ENCODE measurements at regions of chr4 and their contacts with region 1.

Region 1: GRCh38 chr4:89894649-89895550 is at the start of gene MMRN1:
- DNase-seq: peak; percentile 95
- H3K4me3 ChIP-seq: peak within 1 kb of the TSS; percentile 83 to 100 (median 97)
- H3K27ac ChIP-seq: peak within 1 kb of the TSS; percentile 92
- H3K4me1 ChIP-seq: peaks cover 40% of the 10 kb centered on the region
- H3K27me3 ChIP-seq: no peaks in the 10 kb centered on the region
- CTCF ChIP-seq: no peak
- POLR2A ChIP-seq: peak; percentile 90
- total RNA-seq, gene MMRN1: 318 and 414 TPM in 2 replicates

Region 2: DNA sequence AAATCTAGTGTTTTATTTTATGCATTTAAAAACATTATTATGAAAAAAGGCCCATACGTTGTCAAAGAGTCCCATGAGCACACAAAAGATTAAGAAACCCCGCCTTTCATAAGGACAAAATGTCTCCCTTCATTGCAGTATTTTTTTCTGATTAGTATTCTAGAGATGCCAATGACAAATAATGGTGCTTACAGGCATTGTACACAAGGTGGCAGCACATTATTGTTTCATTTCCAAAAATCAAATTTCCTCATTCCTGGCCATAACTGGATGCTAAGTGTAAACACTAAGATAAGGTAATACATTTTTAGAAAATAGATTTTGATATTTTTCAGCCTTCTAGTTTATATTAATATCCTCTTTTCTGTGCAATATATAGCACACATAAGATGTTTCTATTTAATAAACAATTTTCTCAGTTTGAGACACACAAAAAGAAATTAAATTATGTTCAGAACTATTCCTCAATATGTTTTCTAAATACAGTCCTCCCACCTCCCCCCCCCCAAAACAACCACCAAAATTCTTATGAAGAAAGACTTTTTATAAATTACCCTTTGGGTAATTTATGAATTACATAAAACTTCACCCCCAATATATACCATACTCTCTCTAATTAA is 735.9 kb before region 1 on chr4:
- CTCF ChIA-PET with region 1: no interaction called
- POLR2A ChIA-PET with region 1: no interaction called
- dilution Hi-C with region 1: no loop called
- intact Hi-C with region 1: loop called (anchors 10 kb)
- DNase-seq: peak; percentile 77
- H3K4me3 ChIP-seq: no peak overlapping the region
- H3K27ac ChIP-seq: no peak overlapping the region
- H3K4me1 ChIP-seq: peaks cover 23% of the 10 kb centered on the region
- H3K27me3 ChIP-seq: no peaks in the 10 kb centered on the region
- CTCF ChIP-seq: peak; percentile 44 to 47
- POLR2A ChIP-seq: no peak

Region 3: DNA sequence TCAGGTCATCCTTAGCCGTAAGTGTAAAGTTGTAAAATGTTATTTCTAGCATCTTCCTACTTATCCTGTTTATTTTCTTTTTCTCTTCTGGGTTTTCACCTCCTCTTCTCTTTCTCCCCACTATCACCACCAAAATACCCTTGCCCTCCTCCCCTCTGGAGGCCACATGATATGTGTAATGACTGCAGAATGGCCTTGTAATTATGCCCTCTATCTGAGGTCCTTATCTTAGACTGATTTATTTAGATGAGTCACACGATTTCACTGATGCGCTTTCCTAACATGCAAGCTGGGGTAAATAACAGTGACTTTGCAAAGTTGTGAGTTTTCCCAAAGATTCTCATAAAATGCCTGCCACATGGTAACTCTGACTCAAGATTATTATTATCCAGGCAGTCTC is 355.5 kb before region 1 on chr4:
- CTCF ChIA-PET with region 1: no interaction called
- POLR2A ChIA-PET with region 1: no interaction called
- dilution Hi-C with region 1: no loop called
- intact Hi-C with region 1: loop called (anchors 2 kb)
- DNase-seq: peak; percentile 90
- H3K4me3 ChIP-seq: no peak overlapping the region
- H3K27ac ChIP-seq: peak overlapping the region; percentile 94
- H3K4me1 ChIP-seq: peaks cover 61% of the 10 kb centered on the region
- H3K27me3 ChIP-seq: no peaks in the 10 kb centered on the region
- CTCF ChIP-seq: no peak
- POLR2A ChIP-seq: no peak

Region 4: GRCh38 chr4:89640620-89641366 is 254.1 kb before region 1 on chr4:
- CTCF ChIA-PET with region 1: interaction called, 10 read pairs
- POLR2A ChIA-PET with region 1: no interaction called
- dilution Hi-C with region 1: no loop called
- intact Hi-C with region 1: no loop called
- DNase-seq: no peak
- H3K4me3 ChIP-seq: no peak overlapping the region
- H3K27ac ChIP-seq: no peak overlapping the region
- H3K4me1 ChIP-seq: no peaks in the 10 kb centered on the region
- H3K27me3 ChIP-seq: no peaks in the 10 kb centered on the region
- CTCF ChIP-seq: peak; percentile 56 to 68
- POLR2A ChIP-seq: no peak

Region 5: GRCh38 chr4:89724716-89725115 is 170.2 kb before region 1 on chr4:
- CTCF ChIA-PET with region 1: no interaction called
- POLR2A ChIA-PET with region 1: no interaction called
- dilution Hi-C with region 1: no loop called
- intact Hi-C with region 1: loop called (anchors 10 kb)
- DNase-seq: peak; percentile 66
- H3K4me3 ChIP-seq: no peak overlapping the region
- H3K27ac ChIP-seq: peak overlapping the region; percentile 73
- H3K4me1 ChIP-seq: peaks cover 28% of the 10 kb centered on the region
- H3K27me3 ChIP-seq: no peaks in the 10 kb centered on the region
- CTCF ChIP-seq: no peak
- POLR2A ChIP-seq: no peak

Region 6: GRCh38 chr4:89800012-89800516 is 94.8 kb before region 1 on chr4:
- CTCF ChIA-PET with region 1: no interaction called
- POLR2A ChIA-PET with region 1: no interaction called
- dilution Hi-C with region 1: no loop called
- intact Hi-C with region 1: loop called (anchors 1 kb)
- DNase-seq: peak; percentile 91
- H3K4me3 ChIP-seq: peak overlapping the region in 1 of 3 experiments; percentile 45
- H3K27ac ChIP-seq: peak overlapping the region; percentile 90
- H3K4me1 ChIP-seq: peaks cover 53% of the 10 kb centered on the region
- H3K27me3 ChIP-seq: no peaks in the 10 kb centered on the region
- CTCF ChIP-seq: no peak
- POLR2A ChIP-seq: peak; percentile 77

Region 7: DNA sequence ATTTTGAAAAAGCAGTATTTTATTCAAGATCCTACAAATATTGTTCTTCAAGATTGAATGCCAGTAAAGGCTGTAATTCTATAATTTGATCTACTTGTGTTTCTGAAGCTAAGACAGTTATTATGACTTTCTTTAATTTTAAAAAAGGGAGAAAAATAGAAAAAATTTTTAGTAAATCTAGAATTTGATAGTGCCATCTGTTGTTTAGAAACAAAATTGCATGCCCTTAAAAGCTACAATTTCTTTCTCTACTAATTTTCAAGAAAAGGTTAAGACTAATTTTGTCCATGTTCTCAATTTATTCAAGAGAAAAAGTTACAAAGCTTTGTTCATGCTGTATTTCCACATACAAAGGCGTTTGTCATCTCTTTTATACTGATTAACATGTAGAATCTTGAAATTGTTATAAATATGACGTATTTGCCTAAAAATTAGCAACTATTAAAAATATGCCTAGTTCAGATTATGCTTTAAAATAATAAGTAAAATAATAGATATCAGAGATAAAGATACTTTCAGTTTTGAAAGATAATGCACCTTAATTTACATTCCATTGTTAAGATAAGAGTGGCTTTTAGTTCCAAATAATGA is 25.8 kb before region 1 on chr4:
- CTCF ChIA-PET with region 1: interaction called, 24 read pairs
- POLR2A ChIA-PET with region 1: no interaction called
- dilution Hi-C with region 1: no loop called
- intact Hi-C with region 1: loop called (anchors 2 kb)
- DNase-seq: peak; percentile 31
- H3K4me3 ChIP-seq: no peak overlapping the region
- H3K27ac ChIP-seq: no peak overlapping the region
- H3K4me1 ChIP-seq: no peaks in the 10 kb centered on the region
- H3K27me3 ChIP-seq: no peaks in the 10 kb centered on the region
- CTCF ChIP-seq: peak in 1 of 2 donors; percentile 30
- POLR2A ChIP-seq: no peak

Measured in endothelial cell of umbilical vein (primary cell).